GM12878 (cell line): ENCODE measurements at regions of chr1 and their contacts with region 1.

Region 1: GRCh38 chr1:68496680-68497357 is at the start of gene DEPDC1:
- DNase-seq: peak; percentile 62
- ATAC-seq: peak; percentile 95
- H3K4me3 ChIP-seq: peak within 1 kb of the TSS; percentile 82
- H3K27ac ChIP-seq: peak within 1 kb of the TSS; percentile 87
- H3K4me1 ChIP-seq: no peaks in the 10 kb centered on the region; the same call in 1 of the 2 replicates
- H3K27me3 ChIP-seq: no peaks in the 10 kb centered on the region
- CTCF ChIP-seq: 0 out of 6 replicates have a peak, but pooled peaks of 1 of the 3 experiments have one; percentile 6
- EP300 ChIP-seq: no peak
- POLR2A ChIP-seq: peak; percentile 83
- RAD21 ChIP-seq: no peak
- polyA plus RNA-seq, gene DEPDC1: 6.9 to 10.1 TPM

Region 2: GRCh38 chr1:68301471-68302001 is 195.3 kb before region 1 on chr1:
- CTCF ChIA-PET with region 1: no interaction called
- POLR2A ChIA-PET with region 1: no interaction called
- RAD21 ChIA-PET with region 1: no interaction called
- SMC1A ChIA-PET with region 1: no interaction called
- in situ Hi-C with region 1: no loop called
- intact Hi-C with region 1: no loop called
- DNase-seq: no peak
- ATAC-seq: no peak
- H3K4me3 ChIP-seq: no peak overlapping the region
- H3K27ac ChIP-seq: no peak overlapping the region
- H3K4me1 ChIP-seq: no peaks in the 10 kb centered on the region
- H3K27me3 ChIP-seq: no peaks in the 10 kb centered on the region; a peak in 2 of 4 replicates
- CTCF ChIP-seq: no peak
- EP300 ChIP-seq: no peak
- POLR2A ChIP-seq: no peak
- RAD21 ChIP-seq: no peak

Region 3: GRCh38 chr1:68485431-68486022 is 11.3 kb before region 1 on chr1:
- CTCF ChIA-PET with region 1: interaction called, 4 read pairs
- POLR2A ChIA-PET with region 1: interaction called, 6 read pairs
- RAD21 ChIA-PET with region 1: no interaction called
- SMC1A ChIA-PET with region 1: interaction called, 17 read pairs
- in situ Hi-C with region 1: no loop called
- intact Hi-C with region 1: no loop called
- DNase-seq: no peak
- ATAC-seq: no peak
- H3K4me3 ChIP-seq: no peak overlapping the region
- H3K27ac ChIP-seq: no peak overlapping the region
- H3K4me1 ChIP-seq: no peaks in the 10 kb centered on the region
- H3K27me3 ChIP-seq: no peaks in the 10 kb centered on the region
- CTCF ChIP-seq: no peak
- EP300 ChIP-seq: no peak
- POLR2A ChIP-seq: no peak
- RAD21 ChIP-seq: no peak